ENCODE measurements at regions of chr1 and their contacts with region 1.

Region 1: DNA sequence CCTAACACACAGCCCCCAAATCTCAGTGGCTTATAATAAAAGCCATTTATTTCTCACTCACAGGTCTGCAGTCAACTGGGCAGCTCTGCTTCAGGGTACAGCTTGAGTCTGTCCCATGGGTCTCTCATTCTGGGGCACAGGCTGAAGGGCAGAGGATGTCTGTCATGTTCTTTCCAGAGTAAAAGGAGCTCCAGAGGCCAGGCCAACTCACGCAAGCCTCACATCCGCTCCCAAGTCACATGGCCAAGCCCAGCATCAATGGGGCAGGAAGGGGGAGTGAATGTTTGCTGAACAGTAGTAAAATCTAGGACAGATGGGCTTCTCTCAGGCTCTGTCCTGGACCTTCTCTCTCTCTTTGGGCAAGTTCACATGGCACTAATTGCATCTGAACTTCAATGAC is 7.1 kb upstream of the SSBP3 start:
- DNase-seq: peak in 1 of 3 donors; percentile 47
- ATAC-seq: peak; percentile 58 to 78 (median 70)
- H3K4me3 ChIP-seq: no peak overlapping the region
- H3K27ac ChIP-seq: peak overlapping the region in 2 of 3 donors; percentile 8 to 43
- H3K4me1 ChIP-seq: peaks cover 0 to under 1% (median 0%) of the 10 kb centered on the region in 4 donors
- H3K27me3 ChIP-seq: no peaks in the 10 kb centered on the region
- CTCF ChIP-seq: no peak
- POLR2A ChIP-seq: no peak

Region 2: GRCh38 chr1:54335755-54336108 is 77.6 kb before region 1 on chr1:
- intact Hi-C with region 1: no loop called
- DNase-seq: peak in 1 of 3 donors; percentile 54
- ATAC-seq: peak; percentile 66 to 77 (median 74)
- H3K4me3 ChIP-seq: no peak overlapping the region
- H3K27ac ChIP-seq: peak overlapping the region; percentile 42 to 56 (median 55)
- H3K4me1 ChIP-seq: peaks cover 0 to 5% (median 0%) of the 10 kb centered on the region in 4 donors
- H3K27me3 ChIP-seq: no peaks in the 10 kb centered on the region
- CTCF ChIP-seq: no peak
- POLR2A ChIP-seq: no peak

Region 3: GRCh38 chr1:54464482-54465146 is 51.3 kb after region 1 on chr1:
- intact Hi-C with region 1: no loop called
- DNase-seq: no peak
- ATAC-seq: peak; percentile 49 to 68 (median 64)
- H3K4me3 ChIP-seq: no peak overlapping the region
- H3K27ac ChIP-seq: no peak overlapping the region
- H3K4me1 ChIP-seq: peaks cover 0 to 3% (median 0%) of the 10 kb centered on the region in 4 donors
- H3K27me3 ChIP-seq: no peaks in the 10 kb centered on the region
- CTCF ChIP-seq: no peak
- POLR2A ChIP-seq: no peak

Region 4: GRCh38 chr1:54480525-54480848 is 67.2 kb after region 1 on chr1:
- intact Hi-C with region 1: loop called (anchors 5 kb)
- DNase-seq: no peak
- ATAC-seq: peak in 1 of 4 donors; percentile 20
- H3K4me3 ChIP-seq: no peak overlapping the region
- H3K27ac ChIP-seq: no peak overlapping the region
- H3K4me1 ChIP-seq: no peaks in the 10 kb centered on the region
- H3K27me3 ChIP-seq: no peaks in the 10 kb centered on the region
- CTCF ChIP-seq: no peak
- POLR2A ChIP-seq: no peak